ENCODE measurements at regions of chr6 and their contacts with region 1.

Region 1: DNA sequence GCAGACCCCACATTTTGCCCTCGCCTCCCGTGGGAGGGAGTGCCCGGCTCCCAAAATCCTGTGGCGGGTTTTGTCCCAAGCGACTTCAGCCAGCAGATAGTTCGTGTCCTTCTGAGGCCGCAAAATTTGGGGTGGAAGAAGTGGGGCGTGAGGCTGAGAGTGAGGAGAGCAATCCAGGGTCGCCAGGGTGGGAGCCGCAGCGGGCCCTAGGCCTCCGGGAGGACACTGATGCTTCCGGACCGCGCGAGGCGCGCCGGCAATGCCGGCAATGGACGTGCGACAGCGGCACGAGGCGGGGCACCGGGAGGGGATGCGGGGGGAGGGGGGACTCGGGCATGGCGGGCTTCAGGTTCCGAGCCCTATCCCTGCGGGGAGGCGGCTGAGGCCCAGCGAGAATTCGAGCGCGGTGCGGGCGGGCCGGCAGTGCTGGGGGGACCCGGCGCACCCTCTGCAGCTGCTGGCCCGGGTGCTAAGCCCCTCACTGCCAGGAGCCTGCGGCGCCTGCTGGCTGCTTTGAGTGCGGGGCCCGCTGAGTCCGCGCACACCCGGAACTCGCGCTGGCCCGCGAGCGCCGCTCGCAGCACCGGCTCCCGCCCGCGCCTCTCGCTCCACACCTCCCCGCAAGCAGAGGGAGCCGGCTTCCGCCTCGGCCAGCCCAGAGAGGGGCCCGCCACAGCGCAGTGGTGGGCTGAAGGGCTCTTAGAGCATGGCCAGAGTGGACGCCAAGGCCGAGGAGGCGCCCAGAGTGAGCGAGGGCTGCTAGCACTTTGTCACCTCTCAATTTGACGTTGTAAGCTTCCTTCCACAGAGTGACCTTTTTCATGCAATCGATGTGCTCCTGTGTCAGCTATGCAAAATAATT is 143.8 kb downstream of the LPA start:
- DNase-seq: peak; percentile 25 to 96
- H3K4me3 ChIP-seq: peak overlapping the region; percentile 50 to 82 (median 71)
- H3K27ac ChIP-seq: peak overlapping the region; percentile 54; the same call in 1 of the 2 replicates
- H3K4me1 ChIP-seq: no peaks in the 10 kb centered on the region; a peak in 2 of 7 replicates
- H3K27me3 ChIP-seq: no peaks in the 10 kb centered on the region
- CTCF ChIP-seq: peak in 1 of 3 experiments; percentile 83; a peak in 2 of 4 replicates
- EP300 ChIP-seq: no peak
- POLR2A ChIP-seq: peak; percentile 28 to 74
- RAD21 ChIP-seq: peak; percentile 69 to 76; a peak in 3 of 4 replicates

Region 2: DNA sequence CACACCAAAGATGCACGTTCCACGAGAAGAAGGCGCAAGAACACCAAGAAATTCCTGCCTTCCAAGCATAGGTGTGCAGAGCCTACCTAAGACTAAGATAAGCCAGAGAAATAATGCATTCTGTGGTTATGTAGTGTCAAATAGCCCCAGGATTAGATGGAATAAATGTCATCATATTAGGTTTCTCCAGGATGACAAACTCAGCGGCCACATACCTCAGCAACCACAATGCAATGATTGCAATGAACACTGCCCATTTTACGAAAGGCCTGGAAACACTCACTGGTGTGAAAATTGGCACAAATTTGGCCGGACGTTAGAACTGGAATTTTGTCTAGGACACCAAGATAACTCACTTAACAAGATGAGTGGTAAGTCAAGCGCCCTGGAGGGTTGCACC is 42.4 kb before region 1 on chr6:
- CTCF ChIA-PET with region 1: no interaction called
- POLR2A ChIA-PET with region 1: no interaction called
- DNase-seq: no peak
- H3K4me3 ChIP-seq: no peak overlapping the region
- H3K27ac ChIP-seq: no peak overlapping the region
- H3K4me1 ChIP-seq: no peaks in the 10 kb centered on the region
- H3K27me3 ChIP-seq: no peaks in the 10 kb centered on the region
- CTCF ChIP-seq: no peak
- EP300 ChIP-seq: no peak
- POLR2A ChIP-seq: no peak
- RAD21 ChIP-seq: no peak

Region 3: DNA sequence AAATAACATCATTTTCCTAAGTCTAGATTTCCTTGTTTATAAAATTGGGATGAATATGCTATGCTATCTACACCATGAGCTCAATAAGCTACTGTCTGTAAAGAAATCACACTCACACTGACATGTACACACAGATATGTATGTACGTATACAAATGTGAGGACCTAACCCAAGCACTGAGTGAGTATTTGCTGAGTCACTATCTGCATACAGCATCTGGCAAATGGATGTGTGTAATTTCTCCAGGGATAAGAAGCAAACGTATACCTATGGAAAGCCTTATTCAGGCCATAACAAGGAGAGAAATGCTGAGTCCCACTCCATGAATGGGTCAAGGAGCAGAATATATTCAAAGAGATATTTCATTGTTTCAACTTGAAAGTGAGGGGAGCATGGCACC is 10.1 kb before region 1 on chr6:
- CTCF ChIA-PET with region 1: interaction called, 28 read pairs
- POLR2A ChIA-PET with region 1: interaction called, 7 read pairs
- DNase-seq: no peak
- H3K4me3 ChIP-seq: no peak overlapping the region
- H3K27ac ChIP-seq: no peak overlapping the region
- H3K4me1 ChIP-seq: no peaks in the 10 kb centered on the region
- H3K27me3 ChIP-seq: no peaks in the 10 kb centered on the region
- CTCF ChIP-seq: no peak
- EP300 ChIP-seq: no peak
- POLR2A ChIP-seq: no peak
- RAD21 ChIP-seq: no peak

Region 4: DNA sequence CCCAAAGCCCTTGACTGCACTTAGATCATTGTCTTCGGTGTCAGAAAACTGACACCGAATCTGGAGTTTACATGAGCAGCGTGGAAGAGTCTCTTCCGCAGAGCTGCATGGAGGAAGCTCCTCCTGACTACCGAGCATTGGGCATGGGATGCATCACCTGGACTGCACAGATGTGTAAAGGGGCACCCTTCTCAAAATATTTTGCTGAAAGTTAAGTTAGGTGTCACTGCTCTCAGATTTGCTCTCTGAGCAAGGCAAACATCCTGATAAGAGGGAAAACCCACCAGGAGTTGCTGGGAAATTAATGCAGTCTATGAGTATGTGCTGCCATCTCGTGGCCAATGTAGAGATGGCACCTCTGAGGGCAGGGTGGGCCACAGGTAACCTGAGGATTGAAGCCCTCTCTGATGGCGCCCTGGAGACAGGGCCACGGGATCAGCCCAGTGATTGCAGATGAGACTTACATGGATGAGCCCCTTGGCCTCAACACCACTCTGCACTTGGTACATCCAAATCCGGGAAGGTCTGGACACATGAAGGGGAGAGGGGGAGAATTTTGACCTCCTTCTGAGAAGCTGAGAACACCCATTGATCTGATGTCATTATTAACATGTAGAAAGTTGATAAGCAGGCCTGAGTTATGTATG is 13.9 kb after region 1 on chr6:
- CTCF ChIA-PET with region 1: interaction called, 67 read pairs
- POLR2A ChIA-PET with region 1: interaction called, 4 read pairs
- DNase-seq: peak; percentile 50 to 94
- H3K4me3 ChIP-seq: peak overlapping the region in 2 of 4 experiments; percentile 19 to 48; a peak in 3 of 8 replicates
- H3K27ac ChIP-seq: no peak overlapping the region
- H3K4me1 ChIP-seq: peaks cover 0 to 2% (median 0%) of the 10 kb centered on the region in 4 experiments; a peak in 1 of 7 replicates
- H3K27me3 ChIP-seq: no peaks in the 10 kb centered on the region
- CTCF ChIP-seq: peak; percentile 85 to 95 (median 88)
- EP300 ChIP-seq: no peak
- POLR2A ChIP-seq: no peak
- RAD21 ChIP-seq: peak; percentile 95 to 96